ENCODE measurements at regions of chr16 and their contacts with region 1.

Region 1: DNA sequence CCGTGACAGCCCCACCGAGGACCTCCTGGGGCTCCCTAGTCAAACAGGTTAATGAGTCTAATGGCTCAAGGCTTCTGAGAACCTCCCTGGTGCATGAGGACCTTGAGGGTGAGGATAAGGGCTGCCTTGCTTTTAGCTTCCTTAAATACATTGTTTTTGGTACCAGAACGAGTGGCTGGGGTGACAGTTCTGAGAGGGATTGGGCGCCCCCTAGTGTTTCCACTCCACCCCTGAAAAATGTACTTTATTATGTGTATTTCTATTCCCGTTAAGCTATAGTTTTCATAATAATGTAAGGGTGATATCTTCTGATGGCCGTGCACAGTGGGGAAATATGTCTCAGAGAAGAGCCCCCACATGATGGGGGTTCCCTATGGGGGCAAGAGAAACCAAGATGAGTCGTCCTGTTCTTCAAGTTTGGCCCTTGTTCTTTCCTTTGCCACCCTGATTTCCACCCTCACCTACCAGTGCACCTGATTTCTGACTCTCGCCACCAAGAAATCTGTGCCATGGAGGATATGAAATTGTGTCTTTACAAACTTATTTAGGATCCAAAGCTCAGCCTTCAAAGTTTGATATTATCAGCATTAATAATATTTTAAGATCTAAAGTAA is 14.5 kb upstream of the VWA3A start:
- DNase-seq: peak; percentile 87
- H3K4me3 Mint-ChIP-seq: no peak overlapping the region
- H3K27ac Mint-ChIP-seq: no peak overlapping the region
- H3K4me1 Mint-ChIP-seq: peaks cover 7% of the 10 kb centered on the region
- H3K27me3 Mint-ChIP-seq: no peaks in the 10 kb centered on the region

Region 2: DNA sequence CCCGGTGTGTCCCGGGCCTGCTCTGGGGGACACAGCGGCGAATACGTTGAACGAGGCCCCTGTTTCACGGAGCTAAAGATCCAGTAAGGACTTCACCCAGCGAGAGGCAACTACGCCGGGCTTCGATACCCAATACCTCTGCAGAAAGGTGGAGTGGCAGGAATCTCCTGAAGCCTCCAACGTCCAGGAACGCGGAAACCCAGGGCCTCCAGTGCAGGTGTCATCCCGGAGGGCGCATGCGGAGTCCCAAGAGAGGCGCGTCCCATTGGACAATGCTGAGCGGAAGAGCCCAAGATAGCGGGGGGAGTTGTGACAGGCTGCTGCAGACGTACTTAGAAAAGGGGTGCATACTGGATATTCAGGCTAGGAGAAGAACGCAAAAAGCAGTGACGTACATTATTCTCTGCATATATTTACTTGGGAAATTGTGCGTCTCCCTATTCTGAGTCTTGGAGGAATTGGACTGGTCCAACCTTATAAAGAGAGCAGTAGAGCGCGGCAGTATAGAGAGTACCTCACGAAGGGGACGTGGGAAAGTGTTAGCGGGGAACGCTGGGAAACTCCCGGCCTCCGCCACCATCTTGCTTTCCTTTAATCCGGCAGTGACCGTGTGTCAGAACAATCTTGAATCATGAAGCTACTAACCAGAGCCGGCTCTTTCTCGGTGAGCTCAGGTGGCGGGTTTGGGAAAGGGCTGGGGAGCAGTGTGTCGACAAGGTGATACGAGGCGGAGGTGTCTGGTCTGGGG is 124.8 kb before region 1 on chr16 and contains the start of gene UQCRC2:
- CTCF ChIA-PET with region 1: interaction called, 5 read pairs
- intact Hi-C with region 1: loop called (anchors 1 kb)
- DNase-seq: peak; percentile 93
- H3K4me3 Mint-ChIP-seq: peak within 1 kb of the TSS; percentile 95
- H3K27ac Mint-ChIP-seq: peak within 1 kb of the TSS; percentile 97
- H3K4me1 Mint-ChIP-seq: peaks cover 56% of the 10 kb centered on the region
- H3K27me3 Mint-ChIP-seq: no peaks in the 10 kb centered on the region
- total RNA-seq, gene UQCRC2: 356 to 378 TPM

Region 3: GRCh38 chr16:22007509-22008214 is 70.1 kb before region 1 on chr16 and contains the start of gene MOSMO:
- CTCF ChIA-PET with region 1: interaction called, 308 read pairs
- intact Hi-C with region 1: no loop called
- DNase-seq: peak; percentile 64
- H3K4me3 Mint-ChIP-seq: peak within 1 kb of the TSS; percentile 85
- H3K27ac Mint-ChIP-seq: peak within 1 kb of the TSS; percentile 73
- H3K4me1 Mint-ChIP-seq: peaks cover 40% of the 10 kb centered on the region
- H3K27me3 Mint-ChIP-seq: no peaks in the 10 kb centered on the region
- total RNA-seq, gene MOSMO: 6.5 to 6.7 TPM

Region 4: GRCh38 chr16:22035153-22035552 is 42.7 kb before region 1 on chr16:
- CTCF ChIA-PET with region 1: interaction called, 26 read pairs
- intact Hi-C with region 1: no loop called
- DNase-seq: peak; percentile 30
- H3K4me3 Mint-ChIP-seq: no peak overlapping the region
- H3K27ac Mint-ChIP-seq: peak overlapping the region; percentile 30
- H3K4me1 Mint-ChIP-seq: peaks cover 34% of the 10 kb centered on the region
- H3K27me3 Mint-ChIP-seq: no peaks in the 10 kb centered on the region

Region 5: DNA sequence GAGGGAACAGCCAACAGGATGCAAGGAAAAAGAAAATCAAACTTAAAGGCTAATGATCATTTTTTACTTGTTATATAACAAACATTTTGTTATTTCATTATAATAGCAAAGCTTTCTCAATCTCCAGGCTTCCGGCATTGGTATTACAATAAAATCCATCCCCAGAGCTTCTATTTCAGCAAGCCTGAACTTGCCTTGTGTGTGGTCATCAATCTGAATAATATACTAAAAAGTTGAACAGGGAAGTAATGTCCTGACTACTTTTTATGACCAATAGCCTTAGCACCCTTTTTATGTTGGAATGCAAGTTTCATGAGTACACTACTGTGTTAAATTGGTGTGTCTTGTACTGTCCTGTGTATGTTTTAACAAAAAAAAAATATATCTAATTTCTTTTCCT is 12.6 kb before region 1 on chr16:
- CTCF ChIA-PET with region 1: interaction called, 26 read pairs
- intact Hi-C with region 1: no loop called
- DNase-seq: no peak
- H3K4me3 Mint-ChIP-seq: no peak overlapping the region
- H3K27ac Mint-ChIP-seq: no peak overlapping the region
- H3K4me1 Mint-ChIP-seq: peaks cover 8% of the 10 kb centered on the region
- H3K27me3 Mint-ChIP-seq: no peaks in the 10 kb centered on the region

Region 6: DNA sequence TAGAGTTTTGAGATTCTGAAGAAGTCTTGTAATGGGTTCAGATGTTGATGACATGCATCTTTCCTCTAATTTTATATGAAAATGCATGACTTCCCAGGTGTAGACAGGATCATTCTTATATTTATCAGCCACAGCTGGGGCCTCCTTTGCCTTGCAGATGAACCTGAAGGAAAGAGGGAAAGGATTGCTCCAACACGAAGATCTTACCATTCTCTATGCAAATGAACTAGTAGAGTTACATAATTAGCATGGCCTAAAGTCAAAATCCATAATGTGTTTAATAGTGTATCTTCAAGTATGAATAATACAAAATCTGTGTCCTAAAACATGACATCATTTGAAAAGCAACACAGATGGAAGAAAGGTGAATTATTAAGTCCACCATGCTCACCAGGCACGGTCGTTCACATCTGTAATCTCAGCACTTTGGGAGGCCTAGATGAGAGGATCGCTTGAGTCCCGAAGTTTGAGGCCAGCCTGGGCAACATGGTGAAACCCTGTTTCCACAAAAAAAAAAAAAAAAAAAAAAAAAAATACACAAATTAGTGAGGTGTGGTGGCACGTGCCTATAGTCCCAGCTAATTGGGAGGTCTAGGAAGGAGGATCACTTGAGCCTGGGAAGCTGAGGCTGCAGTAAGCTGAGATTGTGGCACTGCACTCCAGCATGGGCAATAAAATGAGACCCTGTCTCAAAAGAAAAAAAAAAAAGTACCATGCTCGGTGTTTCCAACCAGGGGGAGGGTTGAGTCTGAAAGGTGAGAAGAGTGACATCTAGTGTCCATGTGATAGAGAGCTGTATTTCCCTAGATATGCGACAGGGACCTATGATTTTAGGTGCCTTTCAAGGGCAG is 20.8 kb after region 1 on chr16:
- CTCF ChIA-PET with region 1: interaction called, 16 read pairs
- intact Hi-C with region 1: loop called (anchors 1 kb)
- DNase-seq: no peak
- H3K4me3 Mint-ChIP-seq: peak overlapping the region; percentile 28
- H3K27ac Mint-ChIP-seq: no peak overlapping the region
- H3K4me1 Mint-ChIP-seq: no peaks in the 10 kb centered on the region
- H3K27me3 Mint-ChIP-seq: peaks cover 5% of the 10 kb centered on the region

Region 7: DNA sequence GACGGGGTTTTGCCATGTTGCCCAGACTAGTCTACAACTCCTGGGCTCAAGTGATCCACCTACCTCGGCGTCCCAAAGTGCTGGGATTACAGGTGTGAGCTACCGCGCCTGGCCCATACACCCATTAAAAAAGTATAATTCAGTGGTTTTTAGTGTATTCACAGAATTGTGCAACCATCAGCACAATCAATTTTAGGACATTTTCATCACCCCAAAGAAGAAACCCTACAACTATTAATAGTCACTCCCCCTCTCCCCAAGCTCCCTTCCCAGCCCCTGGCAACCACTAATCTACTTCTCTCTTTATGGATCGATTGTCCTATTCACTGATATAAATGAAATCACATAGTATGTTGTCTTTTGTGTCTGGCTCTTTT is 124.4 kb after region 1 on chr16:
- CTCF ChIA-PET with region 1: no interaction called
- intact Hi-C with region 1: no loop called
- DNase-seq: no peak
- H3K4me3 Mint-ChIP-seq: no peak overlapping the region
- H3K27ac Mint-ChIP-seq: no peak overlapping the region
- H3K4me1 Mint-ChIP-seq: peaks cover 12% of the 10 kb centered on the region
- H3K27me3 Mint-ChIP-seq: no peaks in the 10 kb centered on the region

Region 8: GRCh38 chr16:22670551-22671041 is 592.8 kb after region 1 on chr16:
- CTCF ChIA-PET with region 1: no interaction called
- intact Hi-C with region 1: no loop called
- DNase-seq: peak; percentile 13
- H3K4me3 Mint-ChIP-seq: no peak overlapping the region
- H3K27ac Mint-ChIP-seq: no peak overlapping the region
- H3K4me1 Mint-ChIP-seq: no peaks in the 10 kb centered on the region
- H3K27me3 Mint-ChIP-seq: no peaks in the 10 kb centered on the region

Measured in activated naive CD4-positive, alpha-beta T cell treated with anti-CD3 and anti-CD28 coated beads for 36 hours (primary cell).